ENCODE measurements at regions of chr19 and their contacts with region 1.

Region 1: DNA sequence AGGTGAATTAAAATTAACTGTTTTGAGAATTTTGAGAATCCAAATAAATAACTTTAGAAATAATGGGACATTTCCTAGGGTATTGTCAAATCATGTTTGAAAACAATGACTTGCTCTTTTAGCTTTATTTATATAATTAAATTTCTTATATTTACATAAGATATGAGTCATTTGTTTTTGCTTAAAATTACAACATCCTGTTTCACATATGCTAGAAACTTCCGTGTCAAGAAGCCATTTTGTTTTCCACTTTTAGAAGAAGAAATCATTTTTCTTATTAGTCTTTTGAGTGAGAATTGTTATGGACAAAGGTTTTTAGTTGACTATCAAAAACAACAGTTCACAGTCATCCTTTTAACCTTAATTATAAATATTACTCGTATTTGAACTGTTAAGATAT is 48.2 kb downstream of the DPY19L3 start:
- DNase-seq: peak; percentile 27
- H3K4me3 Mint-ChIP-seq: no peak overlapping the region
- H3K27ac Mint-ChIP-seq: no peak overlapping the region
- H3K4me1 Mint-ChIP-seq: no peaks in the 10 kb centered on the region
- H3K27me3 Mint-ChIP-seq: no peaks in the 10 kb centered on the region
- CTCF ChIP-seq: no peak

Region 2: GRCh38 chr19:32392901-32393300 is 60.8 kb before region 1 on chr19:
- CTCF ChIA-PET with region 1: no interaction called
- POLR2A ChIA-PET with region 1: no interaction called
- intact Hi-C with region 1: no loop called
- DNase-seq: no peak
- H3K4me3 Mint-ChIP-seq: no peak overlapping the region
- H3K27ac Mint-ChIP-seq: no peak overlapping the region
- H3K4me1 Mint-ChIP-seq: peaks cover 6% of the 10 kb centered on the region
- H3K27me3 Mint-ChIP-seq: no peaks in the 10 kb centered on the region
- CTCF ChIP-seq: no peak

Region 3: GRCh38 chr19:32437096-32437495 is 16.6 kb before region 1 on chr19:
- CTCF ChIA-PET with region 1: interaction called, 10 read pairs
- POLR2A ChIA-PET with region 1: no interaction called
- intact Hi-C with region 1: no loop called
- DNase-seq: no peak
- H3K4me3 Mint-ChIP-seq: no peak overlapping the region
- H3K27ac Mint-ChIP-seq: no peak overlapping the region
- H3K4me1 Mint-ChIP-seq: no peaks in the 10 kb centered on the region
- H3K27me3 Mint-ChIP-seq: no peaks in the 10 kb centered on the region
- CTCF ChIP-seq: no peak

Measured in MCF 10A (cell line).